Activated naive CD4-positive, alpha-beta T cell treated with anti-CD3 and anti-CD28 coated beads for 36 hours (primary cell): ENCODE measurements at regions of chr2 and their contacts with region 1.

Region 1: GRCh38 chr2:85561317-85561979 is at the start of gene GGCX:
- DNase-seq: peak; percentile 97
- H3K4me3 Mint-ChIP-seq: peak within 1 kb of the TSS; percentile 90
- H3K27ac Mint-ChIP-seq: peak within 1 kb of the TSS; percentile 85
- H3K4me1 Mint-ChIP-seq: peaks cover 34% of the 10 kb centered on the region
- H3K27me3 Mint-ChIP-seq: no peaks in the 10 kb centered on the region
- total RNA-seq, gene GGCX: 17.5 to 18.8 TPM

Region 2: DNA sequence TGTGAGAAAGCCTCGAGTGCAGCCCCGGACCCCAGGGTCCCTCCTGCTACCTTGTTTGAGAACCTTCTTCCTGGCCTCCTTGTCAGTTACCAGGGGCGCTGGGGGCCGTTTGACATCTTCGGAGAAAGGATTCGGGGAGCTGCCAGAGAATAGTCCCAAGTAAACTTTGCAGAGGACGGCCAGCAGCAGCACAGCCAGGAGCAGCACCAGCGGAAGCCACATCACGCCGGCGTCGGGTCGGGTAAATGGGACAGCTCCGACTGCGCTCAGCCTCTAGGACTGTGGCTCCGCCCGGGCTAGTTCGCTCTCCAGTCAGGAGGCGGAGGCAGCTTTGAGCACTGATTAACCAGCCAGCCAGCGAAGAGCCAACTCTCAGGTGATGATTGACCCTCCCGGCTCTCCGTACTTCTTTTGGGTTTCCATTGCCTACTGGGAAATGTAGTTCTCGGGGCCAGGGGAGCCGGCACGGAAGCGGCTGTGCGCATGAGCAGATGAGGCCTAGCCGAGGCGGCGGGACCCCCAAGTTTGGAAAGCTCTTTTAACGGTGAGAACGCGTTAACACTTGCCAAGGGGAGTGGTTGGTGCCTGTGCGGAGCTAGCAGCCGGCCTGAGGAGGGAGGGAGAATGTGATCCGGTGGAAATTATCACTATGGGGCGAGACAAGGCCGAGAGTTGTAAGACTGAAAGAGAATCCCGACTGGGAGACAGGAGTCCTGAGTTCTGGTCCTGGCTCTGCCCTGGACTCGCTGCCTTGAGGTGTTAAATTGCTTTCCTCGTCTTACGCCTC is 207.0 kb before region 1 on chr2 and contains the starts of genes ELMOD3 and RETSAT:
- CTCF ChIA-PET with region 1: no interaction called
- intact Hi-C with region 1: loop called (anchors 1 kb)
- DNase-seq: peak; percentile 99
- H3K4me3 Mint-ChIP-seq: peak within 1 kb of the TSS; percentile 99
- H3K27ac Mint-ChIP-seq: peak within 1 kb of the TSS; percentile 96
- H3K4me1 Mint-ChIP-seq: peaks cover 36% of the 10 kb centered on the region
- H3K27me3 Mint-ChIP-seq: no peaks in the 10 kb centered on the region
- total RNA-seq, gene ELMOD3: 14.8 to 15.4 TPM
- total RNA-seq, gene RETSAT: 19.7 to 24.5 TPM

Region 3: DNA sequence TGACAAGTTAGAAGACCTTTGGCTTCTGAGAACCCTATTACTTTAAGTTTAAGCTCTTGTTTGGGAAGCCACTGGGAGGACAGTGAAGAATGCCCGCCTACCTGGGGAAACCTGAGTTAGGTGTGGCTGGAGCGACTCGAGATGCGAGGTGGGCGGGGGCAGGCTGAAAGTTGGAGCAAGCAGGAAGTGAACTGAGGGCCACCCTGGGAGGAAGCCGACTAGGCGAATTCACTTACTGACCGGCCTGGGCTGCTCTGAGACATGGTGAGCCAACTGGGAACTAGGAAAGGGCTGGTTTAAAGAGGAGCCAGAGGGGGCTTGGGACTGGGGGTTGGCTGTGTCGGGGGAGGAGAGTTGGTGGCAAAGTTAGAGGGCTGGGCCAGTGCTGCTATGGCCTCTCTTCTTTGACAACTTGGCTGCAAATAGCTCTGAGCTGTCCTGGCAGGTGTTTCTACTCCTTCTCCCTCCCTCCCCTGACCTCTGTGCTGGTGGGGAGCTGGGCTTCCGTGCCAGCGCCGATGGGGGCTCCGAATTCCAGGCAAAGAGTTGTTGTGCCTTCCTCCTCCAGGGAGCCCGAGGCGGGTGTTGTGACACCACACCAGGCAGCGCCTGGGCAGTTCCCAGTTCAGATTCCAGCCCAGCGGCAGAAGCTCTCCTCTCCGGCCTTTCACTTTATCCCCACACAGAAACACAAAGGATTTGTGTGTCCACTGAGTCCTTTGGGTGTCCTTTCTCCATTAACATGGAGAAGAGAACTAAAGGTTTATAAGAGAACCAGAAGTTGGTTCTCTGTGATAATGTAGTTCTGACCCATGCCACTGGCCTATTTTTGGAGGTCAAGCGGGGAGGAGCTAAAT is 16.2 kb after region 1 on chr2 and contains the start of gene VAMP8:
- CTCF ChIA-PET with region 1: interaction called, 3 read pairs
- intact Hi-C with region 1: loop called (anchors 1 kb)
- DNase-seq: peak; percentile 80
- H3K4me3 Mint-ChIP-seq: peak within 1 kb of the TSS; percentile 90
- H3K27ac Mint-ChIP-seq: peak within 1 kb of the TSS; percentile 87
- H3K4me1 Mint-ChIP-seq: peaks cover 28% of the 10 kb centered on the region
- H3K27me3 Mint-ChIP-seq: no peaks in the 10 kb centered on the region
- total RNA-seq, gene VAMP8: 98.7 to 102 TPM

Region 4: DNA sequence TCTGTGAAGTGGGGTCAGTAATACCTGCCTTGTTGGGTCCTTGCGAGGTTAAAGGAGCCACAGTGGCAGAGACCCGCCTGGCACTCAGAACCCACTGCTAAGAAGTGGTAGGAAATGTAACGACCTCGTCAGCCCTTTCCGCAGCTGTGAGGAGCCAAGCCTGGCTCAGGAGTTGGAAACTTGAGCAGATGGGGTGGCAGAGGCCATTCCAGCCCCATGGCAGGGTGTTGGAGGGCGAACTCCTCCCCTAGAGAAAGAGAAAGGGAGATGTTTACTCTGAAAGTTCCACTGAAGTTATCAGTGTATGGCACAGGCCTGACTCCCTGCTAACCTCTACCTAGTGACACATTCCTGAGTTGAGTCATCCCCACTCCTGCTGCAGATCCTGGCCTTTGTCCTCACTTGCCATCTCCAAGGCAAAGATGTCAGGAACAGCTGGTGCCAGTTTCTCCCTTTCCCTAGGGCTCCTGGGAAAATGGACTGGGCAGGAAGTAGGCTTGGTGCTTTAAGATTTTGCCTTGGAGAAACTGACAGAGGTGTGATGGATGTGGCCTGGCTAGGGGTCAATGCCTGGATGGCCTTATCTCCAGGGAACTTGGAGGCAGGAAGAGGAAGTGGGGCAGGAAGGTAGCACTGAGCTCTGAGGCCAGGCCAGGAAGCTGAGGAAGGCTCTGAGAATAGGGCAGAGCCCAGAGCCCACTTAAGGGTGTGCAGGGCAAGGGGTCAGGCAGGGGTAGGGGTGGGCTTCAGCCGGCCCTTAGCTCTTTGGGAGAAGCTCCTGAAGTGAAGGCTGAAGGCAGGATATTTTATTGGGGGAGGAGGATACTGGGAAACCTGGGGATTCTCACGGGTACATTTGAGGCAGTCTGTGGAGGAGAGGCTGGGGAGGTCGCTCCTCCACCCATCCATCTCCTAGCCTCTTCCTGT is 23.7 kb after region 1 on chr2:
- CTCF ChIA-PET with region 1: no interaction called
- intact Hi-C with region 1: loop called (anchors 1 kb)
- DNase-seq: peak; percentile 50
- H3K4me3 Mint-ChIP-seq: peak overlapping the region; percentile 79
- H3K27ac Mint-ChIP-seq: peak overlapping the region; percentile 83
- H3K4me1 Mint-ChIP-seq: peaks cover 40% of the 10 kb centered on the region
- H3K27me3 Mint-ChIP-seq: no peaks in the 10 kb centered on the region

Region 5: DNA sequence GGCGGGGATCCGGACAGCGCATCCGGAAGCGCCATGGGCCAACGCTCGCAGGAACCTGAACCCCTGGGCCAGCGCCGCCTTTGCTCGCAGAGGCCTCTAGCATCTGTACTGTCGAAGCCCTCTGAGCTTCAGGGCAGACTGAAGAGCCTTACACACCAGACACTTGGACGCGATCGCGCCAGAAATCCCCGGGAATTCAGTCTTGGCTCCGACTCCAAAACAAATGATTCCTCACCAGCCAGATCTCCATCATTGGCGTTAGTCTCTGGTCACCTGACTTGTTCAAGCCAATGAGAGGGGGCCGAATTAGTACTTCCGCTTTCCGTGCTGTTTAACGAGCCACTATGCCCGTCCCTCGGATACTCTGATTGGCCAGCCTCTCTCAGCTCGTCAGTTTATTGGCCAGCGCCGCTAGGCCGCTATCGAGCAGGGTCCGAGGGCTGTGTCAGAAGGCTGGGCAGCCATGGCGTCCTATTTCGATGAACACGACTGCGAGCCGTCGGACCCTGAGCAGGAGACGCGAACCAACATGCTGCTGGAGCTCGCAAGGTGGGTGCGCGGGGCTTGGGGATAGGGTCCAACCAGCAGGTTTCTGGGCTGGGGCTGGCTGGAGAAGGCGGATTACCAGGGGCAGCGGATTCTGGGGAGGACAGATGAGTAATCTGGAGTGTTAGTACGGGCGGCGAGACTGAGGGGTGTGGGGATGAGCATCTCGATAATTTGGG is 34.0 kb after region 1 on chr2 and contains the start of gene RNF181:
- CTCF ChIA-PET with region 1: interaction called, 3 read pairs
- intact Hi-C with region 1: loop called (anchors 1 kb)
- DNase-seq: peak; percentile 96
- H3K4me3 Mint-ChIP-seq: peak within 1 kb of the TSS; percentile 97
- H3K27ac Mint-ChIP-seq: peak within 1 kb of the TSS; percentile 92
- H3K4me1 Mint-ChIP-seq: peaks cover 31% of the 10 kb centered on the region
- H3K27me3 Mint-ChIP-seq: no peaks in the 10 kb centered on the region
- total RNA-seq, gene RNF181: 86.8 to 96.1 TPM

Region 6: GRCh38 chr2:85602476-85603234 is 41.2 kb after region 1 on chr2 and contains the start of gene TMEM150A:
- CTCF ChIA-PET with region 1: no interaction called
- intact Hi-C with region 1: loop called (anchors 1 kb)
- DNase-seq: peak; percentile 86
- H3K4me3 Mint-ChIP-seq: peak within 1 kb of the TSS; percentile 87
- H3K27ac Mint-ChIP-seq: peak within 1 kb of the TSS; percentile 33
- H3K4me1 Mint-ChIP-seq: peaks cover 25% of the 10 kb centered on the region
- H3K27me3 Mint-ChIP-seq: no peaks in the 10 kb centered on the region
- total RNA-seq, gene TMEM150A: 0.55 to 0.67 TPM

Region 7: GRCh38 chr2:86305195-86305914 is 743.9 kb after region 1 on chr2:
- CTCF ChIA-PET with region 1: no interaction called
- intact Hi-C with region 1: no loop called
- DNase-seq: no peak
- H3K4me3 Mint-ChIP-seq: no peak overlapping the region
- H3K27ac Mint-ChIP-seq: no peak overlapping the region
- H3K4me1 Mint-ChIP-seq: no peaks in the 10 kb centered on the region
- H3K27me3 Mint-ChIP-seq: no peaks in the 10 kb centered on the region